ENCODE measurements at regions of chr5 and their contacts with region 1.

Region 1: DNA sequence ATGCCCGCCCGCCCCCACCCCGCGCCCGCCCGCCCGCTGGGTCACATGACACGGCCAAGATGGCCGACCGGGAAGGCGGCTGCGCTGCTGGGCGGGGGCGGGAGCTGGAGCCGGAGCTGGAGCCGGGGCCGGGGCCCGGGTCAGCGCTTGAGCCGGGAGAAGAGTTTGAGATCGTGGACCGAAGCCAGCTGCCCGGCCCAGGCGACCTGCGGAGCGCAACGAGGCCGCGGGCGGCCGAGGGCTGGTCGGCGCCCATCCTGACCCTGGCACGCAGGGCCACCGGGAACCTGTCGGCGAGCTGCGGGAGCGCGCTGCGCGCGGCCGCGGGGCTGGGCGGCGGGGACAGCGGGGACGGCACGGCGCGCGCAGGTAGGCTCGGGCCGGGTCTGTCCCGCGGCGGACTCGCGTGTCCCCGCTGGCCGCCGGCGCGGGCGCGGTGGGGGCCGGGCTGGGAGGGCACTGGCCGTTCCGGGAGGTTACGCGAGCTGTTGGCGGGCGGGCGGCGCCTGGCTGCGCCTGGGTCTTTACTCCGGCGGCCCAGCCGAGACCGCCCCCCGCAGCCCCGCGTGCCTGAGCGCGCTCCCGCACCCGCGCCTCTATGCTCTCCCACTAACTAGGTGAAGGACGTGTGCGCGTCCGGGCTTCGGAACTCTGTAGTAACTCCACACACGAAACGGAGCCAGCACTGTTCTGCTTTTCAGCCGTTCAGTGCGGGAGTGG is at the start of gene RUFY1:
- DNase-seq: peak; percentile 69 to 91 (median 82)
- ATAC-seq: peak; percentile 71
- H3K4me3 ChIP-seq: peak within 1 kb of the TSS; percentile 89 to 98
- H3K4me3 Mint-ChIP-seq: peak within 1 kb of the TSS; percentile 97
- H3K27ac ChIP-seq: peak within 1 kb of the TSS; percentile 76 to 80
- H3K27ac Mint-ChIP-seq: peak within 1 kb of the TSS; percentile 97
- H3K4me1 ChIP-seq: peaks cover 26% of the 10 kb centered on the region
- H3K4me1 Mint-ChIP-seq: peaks cover 42% of the 10 kb centered on the region
- H3K27me3 ChIP-seq: no peaks in the 10 kb centered on the region
- H3K27me3 Mint-ChIP-seq: no peaks in the 10 kb centered on the region
- CTCF ChIP-seq: no peak
- total RNA-seq, gene RUFY1: 19.6 to 19.8 TPM

Region 2: DNA sequence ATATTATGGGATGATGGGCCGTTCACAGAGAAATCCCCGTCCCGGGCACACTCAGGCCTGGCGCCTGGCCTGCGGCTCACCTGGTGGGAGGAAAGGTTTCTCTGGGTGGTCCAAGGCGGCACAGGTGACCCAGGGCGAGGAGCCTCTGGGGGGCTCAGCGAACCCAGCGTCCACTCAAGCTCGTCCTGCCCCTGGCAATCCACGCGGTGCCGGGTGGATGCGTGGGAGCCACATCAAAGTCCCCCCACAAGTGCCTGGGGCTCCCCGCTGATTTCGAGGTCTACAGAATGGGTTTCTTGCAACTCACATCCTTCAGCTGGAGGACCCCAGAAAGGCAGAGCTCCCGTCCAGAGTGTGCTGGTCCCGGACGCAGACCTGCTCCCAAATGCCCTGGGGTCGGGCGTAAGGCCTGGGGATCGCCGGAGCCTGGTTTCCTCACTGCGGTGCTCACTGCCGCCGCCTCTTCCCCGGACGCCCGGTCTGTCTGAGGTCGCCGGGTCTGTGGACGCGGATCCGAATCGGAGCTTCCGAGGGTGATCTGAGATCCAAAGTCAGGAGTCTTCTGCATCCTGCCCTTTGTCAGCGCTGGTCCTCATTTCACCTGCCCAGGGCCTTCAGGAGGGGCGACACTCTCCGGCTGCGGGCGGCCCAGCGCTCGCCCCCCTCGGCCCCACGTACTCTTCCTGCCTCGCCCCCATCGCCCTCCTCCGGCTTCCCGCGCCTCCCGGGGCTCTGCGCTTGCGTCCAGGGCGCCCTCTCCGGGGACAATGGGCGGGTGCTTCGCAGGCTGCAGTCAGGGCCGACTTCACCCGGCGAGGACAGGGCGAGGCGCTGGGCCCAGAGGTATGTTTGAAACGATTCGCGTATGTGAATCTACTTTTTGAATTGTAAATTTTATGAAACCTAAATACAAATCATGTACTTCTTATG is 20.3 kb before region 1 on chr5:
- CTCF ChIA-PET with region 1: no interaction called
- POLR2A ChIA-PET with region 1: interaction called, 5 read pairs
- intact Hi-C with region 1: loop called (anchors 1 to 2 kb)
- DNase-seq: peak; percentile 24 to 85 (median 74)
- ATAC-seq: peak; percentile 97
- H3K4me3 ChIP-seq: peak overlapping the region; percentile 59 to 63
- H3K4me3 Mint-ChIP-seq: peak overlapping the region; percentile 75
- H3K27ac ChIP-seq: no peak overlapping the region
- H3K27ac Mint-ChIP-seq: peak overlapping the region; percentile 18
- H3K4me1 ChIP-seq: peaks cover 13% of the 10 kb centered on the region
- H3K4me1 Mint-ChIP-seq: peaks cover 12% of the 10 kb centered on the region
- H3K27me3 ChIP-seq: no peaks in the 10 kb centered on the region
- H3K27me3 Mint-ChIP-seq: no peaks in the 10 kb centered on the region
- CTCF ChIP-seq: no peak

Region 3: GRCh38 chr5:179697993-179698934 is 147.6 kb after region 1 on chr5:
- CTCF ChIA-PET with region 1: no interaction called
- POLR2A ChIA-PET with region 1: no interaction called
- intact Hi-C with region 1: loop called in 1 of 2 experiments (anchors 1 kb)
- DNase-seq: peak; percentile 97 to 100 (median 98)
- ATAC-seq: peak; percentile 87
- H3K4me3 ChIP-seq: peak overlapping the region; percentile 84 to 89
- H3K4me3 Mint-ChIP-seq: peak overlapping the region; percentile 99
- H3K27ac ChIP-seq: peak overlapping the region; percentile 92 to 94
- H3K27ac Mint-ChIP-seq: peak overlapping the region; percentile 100
- H3K4me1 ChIP-seq: peaks cover 32% of the 10 kb centered on the region
- H3K4me1 Mint-ChIP-seq: peaks cover 40% of the 10 kb centered on the region
- H3K27me3 ChIP-seq: no peaks in the 10 kb centered on the region
- H3K27me3 Mint-ChIP-seq: no peaks in the 10 kb centered on the region
- CTCF ChIP-seq: no peak

Measured in CD8-positive, alpha-beta T cell (primary cell).